HCT116 (cell line): ENCODE measurements at regions of chr17 and their contacts with region 1.

Region 1: GRCh38 chr17:4939796-4940624 is at the starts of genes RNF167 and SLC25A11:
- DNase-seq: peak; percentile 100
- ATAC-seq: peak; percentile 85
- H3K4me3 ChIP-seq: peak within 1 kb of the TSS; percentile 86 to 93
- H3K27ac ChIP-seq: peak within 1 kb of the TSS; percentile 95
- H3K4me1 ChIP-seq: peaks cover 10 to 38% of the 10 kb centered on the region in 2 experiments
- H3K27me3 ChIP-seq: no peaks in the 10 kb centered on the region
- CTCF ChIP-seq: no peak
- POLR2A ChIP-seq: peak; percentile 91
- RAD21 ChIP-seq: no peak
- total RNA-seq, gene RNF167: 105 TPM
- total RNA-seq, gene SLC25A11: 75.1 TPM

Region 2: DNA sequence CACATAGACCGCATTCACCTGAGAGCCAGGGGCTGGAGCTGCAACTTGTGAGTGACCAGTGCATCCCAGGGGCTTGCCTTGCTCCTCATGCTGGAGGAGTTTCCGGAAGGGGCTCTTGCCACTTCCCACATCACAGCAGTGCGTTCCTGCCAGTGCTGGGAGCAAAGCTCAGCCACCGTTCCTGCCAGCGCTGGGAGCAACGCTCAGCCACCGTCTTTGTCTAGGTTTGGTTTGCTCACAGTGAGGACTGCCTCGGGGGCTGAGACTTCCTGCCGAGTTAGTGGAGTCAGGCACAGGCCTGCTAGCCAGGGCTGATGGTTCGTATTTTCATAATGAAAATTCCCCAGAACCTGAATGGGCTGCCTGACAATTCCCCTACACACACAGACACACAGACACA is 31.7 kb before region 1 on chr17:
- CTCF ChIA-PET with region 1: interaction called, 15 read pairs
- POLR2A ChIA-PET with region 1: interaction called, 3 read pairs
- RAD21 ChIA-PET with region 1: interaction called in 1 of 2 experiments, 8 read pairs
- intact Hi-C with region 1: no loop called
- DNase-seq: no peak
- ATAC-seq: no peak
- H3K4me3 ChIP-seq: no peak overlapping the region
- H3K27ac ChIP-seq: no peak overlapping the region
- H3K4me1 ChIP-seq: peaks cover 7 to 22% of the 10 kb centered on the region in 2 experiments
- H3K27me3 ChIP-seq: no peaks in the 10 kb centered on the region
- CTCF ChIP-seq: no peak
- POLR2A ChIP-seq: no peak
- RAD21 ChIP-seq: no peak

Region 3: DNA sequence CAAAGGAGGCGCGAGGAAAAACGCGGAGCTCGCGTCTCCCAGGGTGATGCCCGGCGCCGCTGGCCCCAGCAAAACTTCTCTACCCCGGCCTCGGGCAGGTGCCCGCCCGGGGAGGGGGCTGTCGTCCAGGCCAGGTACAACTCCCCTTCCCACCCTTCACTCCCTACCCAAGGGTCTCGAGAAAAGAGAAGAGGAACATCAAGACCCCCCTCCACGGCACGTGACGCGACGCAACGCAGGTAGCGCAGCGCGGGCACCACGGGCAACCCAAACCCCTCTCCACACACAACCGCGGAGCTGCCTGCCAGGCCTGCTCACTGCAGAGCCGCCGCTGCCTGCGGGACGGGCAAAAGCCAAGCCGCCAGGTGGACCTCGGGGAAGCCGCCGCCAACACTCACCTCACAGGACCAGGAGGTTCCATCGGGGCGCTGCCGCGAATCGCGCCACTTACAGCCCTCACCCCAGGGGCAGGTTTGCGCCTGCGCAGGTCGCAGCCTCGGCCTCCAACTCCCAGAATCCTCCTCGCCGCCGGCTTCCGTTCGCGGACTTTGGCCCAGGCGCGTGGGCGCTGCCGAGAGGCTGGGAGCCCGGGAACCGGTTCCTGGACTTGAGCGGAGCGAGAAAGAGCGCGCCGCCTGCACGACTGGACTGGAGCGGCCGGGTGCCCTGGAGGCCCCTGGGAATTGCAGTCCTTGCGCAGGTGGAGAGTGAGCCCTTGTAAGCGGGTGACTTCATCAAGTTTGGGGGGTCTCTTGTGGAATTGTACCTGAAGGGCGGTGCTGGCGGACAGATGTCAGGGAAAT is 171.6 kb after region 1 on chr17 and contains the start of gene ZNF232:
- CTCF ChIA-PET with region 1: no interaction called
- POLR2A ChIA-PET with region 1: no interaction called
- RAD21 ChIA-PET with region 1: no interaction called
- intact Hi-C with region 1: no loop called
- DNase-seq: peak; percentile 91
- ATAC-seq: peak; percentile 91
- H3K4me3 ChIP-seq: peak within 1 kb of the TSS; percentile 66 to 72
- H3K27ac ChIP-seq: peak within 1 kb of the TSS; percentile 66
- H3K4me1 ChIP-seq: peaks cover 0 to 15% of the 10 kb centered on the region in 2 experiments; a peak in 2 of 4 replicates
- H3K27me3 ChIP-seq: no peaks in the 10 kb centered on the region
- CTCF ChIP-seq: no peak
- POLR2A ChIP-seq: peak; percentile 35
- RAD21 ChIP-seq: no peak
- total RNA-seq, gene ZNF232: 11.1 TPM